Stomach (tissue), 19 donors: ENCODE measurements at regions of chr18 and their contacts with region 1.

Region 1: GRCh38 chr18:35143622-35144596 is 96.9 kb upstream of the ZNF397 start:
- DNase-seq: peak; percentile 60 to 87
- H3K4me3 ChIP-seq: no peak overlapping the region
- H3K27ac ChIP-seq: no peak overlapping the region
- H3K4me1 ChIP-seq: peaks cover 0 to 8% (median 4%) of the 10 kb centered on the region in 4 donors
- H3K27me3 ChIP-seq: no peaks in the 10 kb centered on the region
- CTCF ChIP-seq: peak in 5 of 7 experiments; percentile 39 to 87 (median 66)
- EP300 ChIP-seq: no peak
- POLR2A ChIP-seq: no peak

Region 2: GRCh38 chr18:35005963-35006577 is 137.8 kb before region 1 on chr18:
- intact Hi-C with region 1: loop called (anchors 5 kb)
- DNase-seq: peak in 1 of 2 donors; percentile 87
- H3K4me3 ChIP-seq: no peak overlapping the region
- H3K27ac ChIP-seq: no peak overlapping the region
- H3K4me1 ChIP-seq: no peaks in the 10 kb centered on the region
- H3K27me3 ChIP-seq: no peaks in the 10 kb centered on the region
- CTCF ChIP-seq: peak in 5 of 7 experiments; percentile 34 to 66 (median 49)
- EP300 ChIP-seq: no peak
- POLR2A ChIP-seq: no peak